ENCODE measurements at regions of chr5 and their contacts with region 1.

Region 1: DNA sequence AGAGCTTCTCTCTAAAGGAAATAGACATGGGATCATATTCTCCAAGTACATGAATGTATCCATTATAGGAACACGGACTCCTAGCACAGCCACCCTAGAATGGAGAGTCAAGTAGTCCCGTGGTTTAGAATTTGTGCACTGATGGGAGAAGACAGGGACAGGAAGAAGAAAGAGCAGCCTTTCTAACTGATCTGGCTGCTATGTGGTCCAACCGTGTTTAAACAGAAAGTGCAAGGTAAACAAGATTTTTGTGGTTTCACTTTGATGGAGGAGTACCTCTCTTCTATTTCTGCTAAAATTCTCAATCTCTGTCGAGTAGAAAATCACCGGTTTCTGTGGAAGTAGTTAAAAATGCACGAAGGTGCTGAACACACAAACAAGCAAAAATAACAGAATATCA is 171.3 kb downstream of the ST8SIA4 start:
- DNase-seq: peak; percentile 8
- H3K4me3 Mint-ChIP-seq: peak overlapping the region; percentile 63
- H3K27ac Mint-ChIP-seq: no peak overlapping the region
- H3K4me1 Mint-ChIP-seq: peaks cover 4% of the 10 kb centered on the region
- H3K27me3 Mint-ChIP-seq: no peaks in the 10 kb centered on the region

Region 2: DNA sequence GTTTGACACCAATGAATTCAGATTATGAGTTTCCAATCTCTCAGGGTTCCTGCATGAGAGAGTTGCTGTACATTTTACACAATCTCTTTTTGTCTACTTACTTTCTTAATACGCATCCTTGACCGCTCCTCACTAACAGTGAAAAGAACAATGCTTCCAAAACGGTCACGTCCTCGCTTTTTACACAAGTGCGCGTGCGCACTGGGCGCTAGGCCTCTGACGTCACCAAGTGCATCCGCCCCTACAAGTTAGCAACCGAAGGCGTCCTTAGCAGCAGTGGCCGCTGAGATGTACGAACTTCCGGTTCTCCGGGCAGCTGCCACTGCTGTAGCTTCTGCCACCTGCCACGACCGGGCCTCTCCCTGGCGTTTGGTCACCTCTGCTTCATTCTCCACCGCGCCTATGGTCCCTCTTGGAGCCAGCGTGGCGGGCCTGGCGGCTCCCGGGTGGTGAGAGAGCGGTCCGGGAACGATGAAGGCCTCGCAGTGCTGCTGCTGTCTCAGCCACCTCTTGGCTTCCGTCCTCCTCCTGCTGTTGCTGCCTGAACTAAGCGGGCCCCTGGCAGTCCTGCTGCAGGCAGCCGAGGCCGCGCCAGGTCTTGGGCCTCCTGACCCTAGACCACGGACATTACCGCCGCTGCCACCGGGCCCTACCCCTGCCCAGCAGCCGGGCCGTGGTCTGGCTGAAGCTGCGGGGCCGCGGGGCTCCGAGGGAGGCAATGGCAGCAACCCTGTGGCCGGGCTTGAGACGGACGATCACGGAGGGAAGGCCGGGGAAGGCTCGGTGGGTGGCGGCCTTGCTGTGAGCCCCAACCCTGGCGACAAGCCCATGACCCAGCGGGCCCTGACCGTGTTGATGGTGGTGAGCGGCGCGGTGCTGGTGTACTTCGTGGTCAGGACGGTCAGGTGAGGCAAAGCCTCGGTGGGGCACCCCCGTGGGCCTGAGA is 196.4 kb before region 1 on chr5 and contains the start of gene FAM174A:
- CTCF ChIA-PET with region 1: no interaction called
- intact Hi-C with region 1: loop called (anchors 5 kb)
- DNase-seq: peak; percentile 96
- H3K4me3 Mint-ChIP-seq: peak within 1 kb of the TSS; percentile 94
- H3K27ac Mint-ChIP-seq: peak within 1 kb of the TSS; percentile 75
- H3K4me1 Mint-ChIP-seq: peaks cover 16% of the 10 kb centered on the region
- H3K27me3 Mint-ChIP-seq: no peaks in the 10 kb centered on the region
- total RNA-seq, gene FAM174A: 3.1 to 3.9 TPM

Region 3: DNA sequence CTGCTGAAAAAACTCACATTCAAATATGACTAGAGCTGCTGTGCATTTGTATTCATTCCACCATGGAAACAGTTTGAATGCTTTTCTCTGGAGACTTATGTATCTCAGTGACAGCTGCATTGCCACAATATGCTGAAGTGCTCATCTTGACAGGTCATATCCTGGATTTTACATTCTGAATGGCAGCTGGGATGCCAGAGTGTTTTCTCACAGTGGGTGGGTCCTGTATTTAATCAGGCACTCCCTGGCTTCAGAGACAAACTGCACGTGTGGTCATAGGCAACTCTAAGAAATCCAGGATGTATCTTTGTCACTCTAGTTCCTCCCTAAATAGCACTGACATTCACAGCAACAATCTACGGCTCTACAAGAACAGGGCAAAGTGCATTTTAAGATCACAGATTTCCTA is 95.7 kb after region 1 on chr5:
- CTCF ChIA-PET with region 1: no interaction called
- intact Hi-C with region 1: loop called (anchors 5 kb)
- DNase-seq: peak; percentile 12
- H3K4me3 Mint-ChIP-seq: no peak overlapping the region
- H3K27ac Mint-ChIP-seq: no peak overlapping the region
- H3K4me1 Mint-ChIP-seq: peaks cover 33% of the 10 kb centered on the region
- H3K27me3 Mint-ChIP-seq: no peaks in the 10 kb centered on the region

Measured in activated naive CD4-positive, alpha-beta T cell treated with anti-CD3 and anti-CD28 coated beads for 36 hours (primary cell).